SK-N-SH (cell line): ENCODE measurements at regions of chr1 and their contacts with region 1.

Region 1: GRCh38 chr1:9110669-9111356 is 18.1 kb downstream of the GPR157 start:
- DNase-seq: peak; percentile 87
- H3K4me3 ChIP-seq: peak overlapping the region in 1 of 2 experiments; percentile 24; a peak in 1 of 4 replicates
- H3K27ac ChIP-seq: no peak overlapping the region
- H3K4me1 ChIP-seq: peaks cover 0 to 2% of the 10 kb centered on the region in 2 experiments; a peak in 1 of 4 replicates
- H3K27me3 ChIP-seq: no peaks in the 10 kb centered on the region
- CTCF ChIP-seq: peak; percentile 90
- EP300 ChIP-seq: no peak
- RAD21 ChIP-seq: peak; percentile 85

Region 2: GRCh38 chr1:8911416-8911815 is 199.4 kb before region 1 on chr1:
- CTCF ChIA-PET with region 1: interaction called, 12 read pairs
- POLR2A ChIA-PET with region 1: no interaction called
- DNase-seq: no peak
- H3K4me3 ChIP-seq: no peak overlapping the region
- H3K27ac ChIP-seq: no peak overlapping the region
- H3K4me1 ChIP-seq: no peaks in the 10 kb centered on the region
- H3K27me3 ChIP-seq: no peaks in the 10 kb centered on the region
- CTCF ChIP-seq: no peak
- EP300 ChIP-seq: no peak
- RAD21 ChIP-seq: no peak

Region 3: GRCh38 chr1:8955406-8955805 is 155.4 kb before region 1 on chr1:
- CTCF ChIA-PET with region 1: no interaction called
- POLR2A ChIA-PET with region 1: no interaction called
- DNase-seq: no peak
- H3K4me3 ChIP-seq: no peak overlapping the region
- H3K27ac ChIP-seq: no peak overlapping the region
- H3K4me1 ChIP-seq: no peaks in the 10 kb centered on the region
- H3K27me3 ChIP-seq: no peaks in the 10 kb centered on the region
- CTCF ChIP-seq: no peak
- EP300 ChIP-seq: no peak
- RAD21 ChIP-seq: no peak

Region 4: GRCh38 chr1:8976896-8977450 is 133.8 kb before region 1 on chr1:
- CTCF ChIA-PET with region 1: no interaction called
- POLR2A ChIA-PET with region 1: no interaction called
- DNase-seq: no peak
- H3K4me3 ChIP-seq: no peak overlapping the region
- H3K27ac ChIP-seq: no peak overlapping the region
- H3K4me1 ChIP-seq: no peaks in the 10 kb centered on the region
- H3K27me3 ChIP-seq: no peaks in the 10 kb centered on the region
- CTCF ChIP-seq: no peak
- EP300 ChIP-seq: no peak
- RAD21 ChIP-seq: no peak

Region 5: DNA sequence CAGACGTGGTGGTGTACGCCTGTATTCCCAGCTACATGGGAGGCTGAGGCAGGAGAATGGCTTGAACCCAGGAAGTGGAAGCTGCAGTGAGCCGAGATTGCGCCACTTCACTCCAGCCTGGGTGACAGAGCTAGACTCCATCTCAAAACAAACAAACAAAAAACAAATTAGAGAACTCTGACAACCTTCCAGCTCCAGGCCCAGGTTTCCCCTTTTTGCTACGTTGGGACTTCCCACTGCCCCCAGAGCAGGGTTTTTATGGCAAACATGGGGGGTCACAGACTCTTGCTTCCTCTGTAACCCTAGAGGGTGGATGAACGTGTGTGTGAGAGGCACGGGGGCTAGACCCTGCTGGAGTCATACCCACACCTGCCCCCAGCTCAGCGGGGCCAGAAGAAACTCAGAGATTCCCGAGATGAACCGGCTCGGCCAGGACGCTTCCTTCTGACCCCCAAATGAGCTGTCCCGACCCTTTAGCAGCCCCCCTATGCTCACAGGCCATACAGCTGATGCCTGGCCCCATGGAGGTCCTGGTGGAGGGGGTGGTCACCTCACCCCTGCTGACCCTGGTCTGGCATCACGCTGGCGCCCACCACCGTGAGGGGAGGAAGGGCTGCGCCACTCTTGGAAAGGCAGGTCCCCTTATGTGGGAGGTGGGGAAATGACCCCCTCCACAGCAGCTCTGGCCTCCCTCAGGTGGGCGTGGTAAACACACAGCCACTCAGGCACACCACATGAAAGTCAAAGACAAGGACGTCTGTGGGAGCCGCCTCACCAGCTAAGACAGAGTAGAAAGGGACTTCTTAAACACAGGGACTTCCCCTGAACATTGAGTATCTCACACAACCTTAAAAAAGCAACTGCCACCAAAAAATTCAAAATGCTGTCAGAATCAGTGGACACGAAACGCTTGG is 10.9 kb after region 1 on chr1:
- CTCF ChIA-PET with region 1: interaction called, 36 read pairs
- POLR2A ChIA-PET with region 1: no interaction called
- DNase-seq: no peak
- H3K4me3 ChIP-seq: no peak overlapping the region
- H3K27ac ChIP-seq: no peak overlapping the region
- H3K4me1 ChIP-seq: no peaks in the 10 kb centered on the region
- H3K27me3 ChIP-seq: no peaks in the 10 kb centered on the region
- CTCF ChIP-seq: no peak
- EP300 ChIP-seq: no peak
- RAD21 ChIP-seq: no peak

Region 6: GRCh38 chr1:9145021-9145668 is 34.3 kb after region 1 on chr1:
- CTCF ChIA-PET with region 1: interaction called, 18 read pairs
- POLR2A ChIA-PET with region 1: no interaction called
- DNase-seq: no peak
- H3K4me3 ChIP-seq: no peak overlapping the region
- H3K27ac ChIP-seq: no peak overlapping the region
- H3K4me1 ChIP-seq: no peaks in the 10 kb centered on the region
- H3K27me3 ChIP-seq: no peaks in the 10 kb centered on the region
- CTCF ChIP-seq: no peak
- EP300 ChIP-seq: no peak
- RAD21 ChIP-seq: no peak

Region 7: DNA sequence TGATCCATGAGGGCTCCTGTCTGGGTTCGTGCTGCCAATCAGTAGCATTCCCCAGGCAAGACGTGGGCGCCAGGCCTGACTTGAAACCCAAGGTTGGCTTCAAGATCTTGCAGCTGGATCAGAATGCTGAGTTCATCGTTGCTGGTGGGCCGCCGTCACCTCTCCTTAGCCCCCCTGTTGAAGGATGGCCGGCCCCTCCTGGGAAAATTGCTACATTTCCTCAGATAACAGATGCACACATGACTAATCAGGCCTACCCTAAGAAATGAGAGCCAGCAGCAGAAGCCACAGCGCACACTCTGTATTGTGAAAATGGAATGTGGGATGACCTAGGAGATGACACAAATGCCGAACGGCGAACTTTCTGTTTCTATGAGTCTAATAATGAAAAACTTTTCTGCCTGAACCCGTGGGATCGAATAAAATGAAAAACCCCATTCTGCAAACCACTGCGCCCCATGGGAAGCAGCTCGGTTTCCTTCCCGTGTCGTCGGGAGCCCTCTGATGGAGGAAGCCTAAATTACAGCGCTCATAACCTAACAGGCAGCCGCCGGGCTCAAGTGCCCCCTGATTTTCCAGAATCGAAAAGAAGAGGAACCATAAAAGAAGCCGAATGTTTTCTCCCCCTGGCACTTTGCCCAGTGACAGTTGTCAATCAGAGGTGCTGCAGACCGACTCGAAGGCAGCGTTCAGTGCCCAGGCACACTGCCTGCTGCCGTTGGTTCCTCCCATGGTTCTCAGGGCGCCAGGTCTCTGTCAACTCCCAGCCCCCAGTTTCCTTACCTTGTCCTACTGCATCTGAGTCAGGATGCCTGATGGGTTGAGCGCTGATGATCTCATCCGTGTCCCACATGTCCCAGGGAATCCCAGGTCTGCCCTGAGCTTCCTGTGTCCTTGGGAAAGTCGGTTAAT is 85.6 kb after region 1 on chr1:
- CTCF ChIA-PET with region 1: interaction called, 138 read pairs
- POLR2A ChIA-PET with region 1: no interaction called
- DNase-seq: peak; percentile 81
- H3K4me3 ChIP-seq: no peak overlapping the region; a peak in 1 of 4 replicates
- H3K27ac ChIP-seq: no peak overlapping the region; a peak in 1 of 4 replicates
- H3K4me1 ChIP-seq: peaks cover 0 to 5% of the 10 kb centered on the region in 2 experiments; a peak in 1 of 4 replicates
- H3K27me3 ChIP-seq: no peaks in the 10 kb centered on the region
- CTCF ChIP-seq: peak; percentile 73
- EP300 ChIP-seq: no peak
- RAD21 ChIP-seq: peak; percentile 92